ENCODE measurements at regions of chr15 and their contacts with region 1.

Region 1: GRCh38 chr15:49046220-49047102 is at the start of gene SECISBP2L:
- DNase-seq: peak; percentile 87 to 95 (median 92)
- H3K4me3 ChIP-seq: peak within 1 kb of the TSS; percentile 75 to 100 (median 93)
- H3K27ac ChIP-seq: peak within 1 kb of the TSS; percentile 26 to 99 (median 93)
- H3K27me3 ChIP-seq: no peaks in the 10 kb centered on the region
- CTCF ChIP-seq: peak in 47 of 56 donors; percentile 12 to 62 (median 40)
- total RNA-seq, gene SECISBP2L: 103 to 402 (median 176) TPM

Region 2: DNA sequence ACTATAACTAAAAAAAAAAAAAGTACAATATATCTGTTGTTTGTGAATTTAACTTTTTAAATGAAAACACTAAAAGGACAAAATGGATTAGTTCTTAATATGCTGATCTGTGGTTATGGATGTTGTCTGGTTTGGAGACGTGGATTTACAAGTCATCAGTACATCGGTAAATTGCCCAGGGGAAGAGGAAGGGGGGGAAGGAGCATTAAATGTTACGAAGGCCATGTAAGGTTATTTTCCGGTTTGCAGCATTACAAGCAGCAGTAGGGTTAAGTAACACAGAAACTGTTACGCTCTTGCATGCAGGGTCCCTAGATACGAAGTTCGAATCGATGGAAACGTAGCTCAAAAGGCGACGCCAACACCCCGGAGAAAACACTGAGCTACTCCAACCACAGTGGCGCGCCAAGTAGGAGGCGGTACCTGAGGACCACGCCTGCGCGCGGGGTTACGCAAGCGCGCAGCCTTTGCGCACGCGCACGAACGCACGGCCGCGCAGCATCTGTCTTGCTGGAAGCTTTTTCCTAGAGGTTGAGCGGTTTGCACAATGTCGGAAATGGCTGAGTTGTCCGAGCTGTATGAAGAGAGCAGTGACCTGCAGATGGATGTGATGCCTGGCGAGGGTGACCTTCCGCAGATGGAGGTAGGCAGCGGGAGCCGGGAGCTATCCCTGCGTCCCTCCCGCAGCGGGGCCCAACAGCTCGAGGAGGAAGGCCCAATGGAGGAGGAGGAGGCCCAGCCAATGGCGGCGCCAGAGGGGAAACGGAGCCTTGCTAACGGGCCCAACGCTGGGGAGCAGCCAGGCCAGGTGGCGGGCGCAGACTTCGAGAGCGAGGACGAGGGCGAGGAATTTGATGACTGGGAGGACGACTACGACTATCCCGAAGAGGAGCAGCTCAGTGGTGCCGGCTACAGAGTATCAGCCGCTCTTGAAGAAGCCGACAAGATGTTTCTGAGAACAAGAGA is 168.5 kb before region 1 on chr15 and contains the start of gene EID1:
- intact Hi-C with region 1: loop called (anchors 5 to 10 kb)
- DNase-seq: peak; percentile 87 to 97 (median 88)
- H3K4me3 ChIP-seq: peak within 1 kb of the TSS; percentile 63 to 99 (median 87)
- H3K27ac ChIP-seq: peak within 1 kb of the TSS; percentile 84 to 98 (median 96)
- H3K27me3 ChIP-seq: no peaks in the 10 kb centered on the region
- CTCF ChIP-seq: peak in 49 of 56 donors; percentile 1 to 66 (median 32)
- total RNA-seq, gene EID1: 107 to 240 (median 184) TPM

Region 3: DNA sequence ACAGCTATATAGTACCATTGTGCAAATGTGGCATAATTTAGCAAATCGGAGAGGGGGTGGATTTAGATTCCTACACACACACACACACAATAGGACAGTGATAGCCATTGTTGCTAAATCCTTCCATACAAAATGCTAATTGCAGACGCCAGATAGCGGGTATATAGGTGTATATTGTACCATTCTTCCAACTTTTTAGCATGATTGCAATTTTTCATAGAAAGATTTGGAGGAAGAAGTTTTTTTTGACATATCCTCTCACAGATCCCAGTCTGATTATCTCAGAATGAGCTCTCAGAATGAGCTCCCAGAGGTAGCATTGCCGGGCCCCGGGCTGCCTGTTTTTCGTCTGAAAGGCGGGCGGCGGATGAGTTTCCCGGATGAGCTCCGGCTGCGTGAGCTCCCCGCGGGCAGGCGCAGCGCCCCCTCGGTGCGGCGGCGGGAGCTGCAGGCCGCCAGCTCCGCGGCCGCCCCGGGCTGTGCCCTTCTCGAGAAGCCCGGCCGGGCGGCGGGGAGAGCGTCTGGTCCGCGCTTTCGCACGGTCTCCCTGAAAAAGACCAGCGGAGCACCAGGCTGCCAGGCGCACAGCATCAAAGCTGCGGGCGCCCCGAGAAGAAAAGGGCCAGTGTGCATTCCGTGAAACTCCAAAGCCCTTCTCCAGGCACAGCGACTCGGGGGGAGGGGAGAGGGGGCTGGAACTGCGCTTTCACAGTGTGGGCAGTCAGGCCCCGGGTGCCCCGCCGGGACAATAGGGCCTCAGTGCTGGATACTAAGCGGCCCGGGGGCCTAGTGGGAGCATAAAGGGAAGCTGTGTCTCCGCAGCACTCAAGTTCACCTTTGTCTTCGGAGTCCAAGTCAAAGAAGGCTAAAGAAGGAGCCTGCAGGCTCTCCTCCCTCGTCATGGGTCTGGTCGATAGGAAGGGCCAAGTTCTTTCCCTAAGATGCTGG is 70.7 kb before region 1 on chr15:
- intact Hi-C with region 1: loop called (anchors 2 kb)
- DNase-seq: peak; percentile 82 to 92 (median 90)
- H3K4me3 ChIP-seq: peak overlapping the region; percentile 43 to 74 (median 59)
- H3K27ac ChIP-seq: peak overlapping the region; percentile 75 to 99 (median 95)
- H3K27me3 ChIP-seq: no peaks in the 10 kb centered on the region
- CTCF ChIP-seq: peak; percentile 74 to 99 (median 88)

Region 4: DNA sequence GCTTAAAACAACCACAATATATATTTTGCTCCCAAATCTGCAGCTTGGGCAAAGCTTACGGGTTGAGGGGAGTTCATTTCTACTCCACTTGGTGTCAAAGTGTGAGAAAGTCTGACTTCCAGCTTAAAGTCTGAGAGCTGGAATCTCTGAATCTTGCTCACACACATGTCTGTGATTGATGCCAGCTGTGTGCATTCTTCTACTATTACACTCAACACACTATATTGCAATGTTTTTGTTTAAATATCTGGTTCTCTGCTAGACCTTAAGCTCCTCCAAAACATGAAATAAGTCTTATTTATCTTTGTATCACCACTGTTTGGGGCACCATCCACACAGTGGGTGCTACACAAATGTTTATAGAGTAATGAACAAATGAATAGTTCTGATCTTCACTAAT is 36.5 kb after region 1 on chr15:
- intact Hi-C with region 1: loop called (anchors 5 kb)
- DNase-seq: no peak
- H3K4me3 ChIP-seq: no peak overlapping the region
- H3K27ac ChIP-seq: peak overlapping the region in 20 of 59 donors; percentile 8 to 97 (median 94)
- H3K27me3 ChIP-seq: no peaks in the 10 kb centered on the region
- CTCF ChIP-seq: no peak

Region 5: GRCh38 chr15:49088996-49089395 is 42.5 kb after region 1 on chr15:
- intact Hi-C with region 1: loop called (anchors 5 kb)
- DNase-seq: peak in 1 of 10 donors; percentile 42
- H3K4me3 ChIP-seq: no peak overlapping the region
- H3K27ac ChIP-seq: peak overlapping the region; percentile 13 to 97 (median 86)
- H3K27me3 ChIP-seq: no peaks in the 10 kb centered on the region
- CTCF ChIP-seq: no peak

Region 6: GRCh38 chr15:49145651-49146609 is 99.5 kb after region 1 on chr15:
- intact Hi-C with region 1: loop called in 1 of 2 experiments (anchors 2 kb)
- DNase-seq: peak in 3 of 10 donors; percentile 16 to 64 (median 18)
- H3K4me3 ChIP-seq: peak overlapping the region in 2 of 59 donors; percentile 4 to 39
- H3K27ac ChIP-seq: peak overlapping the region in 15 of 59 donors; percentile 3 to 66 (median 21)
- H3K27me3 ChIP-seq: no peaks in the 10 kb centered on the region
- CTCF ChIP-seq: peak; percentile 52 to 92 (median 76)

Region 7: DNA sequence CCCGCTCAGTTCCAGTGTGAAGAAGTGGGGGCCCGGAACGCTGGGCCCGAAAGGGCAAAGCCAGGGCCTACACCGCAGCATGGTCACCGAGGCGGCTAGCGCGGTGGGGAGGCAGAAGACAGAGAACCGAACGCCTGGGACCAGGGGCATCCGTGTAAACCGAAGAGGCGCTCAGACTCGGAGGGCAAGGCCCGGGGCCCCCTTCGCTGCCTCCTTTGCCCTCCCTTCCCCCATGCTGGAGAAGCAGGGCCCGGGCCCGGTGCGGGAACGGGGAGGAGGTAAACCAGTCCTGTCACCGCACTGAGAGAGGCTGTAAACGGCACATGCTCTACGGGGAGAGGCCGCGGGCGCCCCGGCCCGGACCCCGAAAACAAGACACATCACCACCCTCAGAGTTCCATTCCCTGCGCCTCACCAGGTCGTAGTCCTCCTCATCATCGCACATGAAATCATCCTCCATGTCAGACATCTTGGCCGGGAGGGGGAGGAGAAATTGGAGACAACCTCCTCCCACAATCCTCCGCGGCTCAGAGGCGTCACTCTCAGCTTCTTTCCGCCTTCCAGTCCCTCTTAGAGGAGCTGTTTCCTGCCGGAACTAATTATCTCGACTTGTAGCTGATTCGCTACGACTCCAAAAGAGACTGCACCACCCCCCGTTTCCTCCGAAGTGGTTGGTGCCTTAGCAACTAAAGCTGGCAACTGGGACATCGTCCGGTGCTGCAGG is 108.8 kb after region 1 on chr15 and contains the start of gene COPS2:
- intact Hi-C with region 1: loop called in 1 of 2 experiments (anchors 2 kb)
- DNase-seq: peak; percentile 89 to 98 (median 95)
- H3K4me3 ChIP-seq: peak within 1 kb of the TSS; percentile 71 to 100 (median 96)
- H3K27ac ChIP-seq: peak within 1 kb of the TSS; percentile 7 to 97 (median 90)
- H3K27me3 ChIP-seq: no peaks in the 10 kb centered on the region
- CTCF ChIP-seq: peak in 51 of 56 donors; percentile 17 to 72 (median 44)
- total RNA-seq, gene COPS2: 32.1 to 97.9 (median 73.1) TPM